Activated B cell treated with CpG ODN at 0.5 μM for 24 hours (primary cell): ENCODE measurements at regions of chr10 and their contacts with region 1.

Region 1: GRCh38 chr10:35642027-35642792 is at the start of gene FZD8:
- DNase-seq: peak; percentile 69
- ATAC-seq: peak; percentile 87
- H3K4me3 Mint-ChIP-seq: peak within 1 kb of the TSS; percentile 88
- H3K27ac Mint-ChIP-seq: no peak within 1 kb of the TSS
- H3K4me1 Mint-ChIP-seq: peaks cover 30% of the 10 kb centered on the region
- H3K27me3 Mint-ChIP-seq: peaks cover 33% of the 10 kb centered on the region
- CTCF ChIP-seq: no peak
- total RNA-seq, gene FZD8: 0.17 and 0.22 TPM in 2 replicates

Region 2: GRCh38 chr10:35090162-35090954 is 551.9 kb before region 1 on chr10 and contains the start of gene CUL2:
- CTCF ChIA-PET with region 1: no interaction called
- POLR2A ChIA-PET with region 1: no interaction called
- intact Hi-C with region 1: loop called (anchors 1 kb)
- DNase-seq: peak; percentile 89
- ATAC-seq: peak; percentile 96
- H3K4me3 Mint-ChIP-seq: peak within 1 kb of the TSS; percentile 98
- H3K27ac Mint-ChIP-seq: peak within 1 kb of the TSS; percentile 98
- H3K4me1 Mint-ChIP-seq: peaks cover 52% of the 10 kb centered on the region
- H3K27me3 Mint-ChIP-seq: peaks cover under 1% of the 10 kb centered on the region
- CTCF ChIP-seq: no peak
- total RNA-seq, gene CUL2: 32.7 and 33.7 TPM in 2 replicates

Region 3: DNA sequence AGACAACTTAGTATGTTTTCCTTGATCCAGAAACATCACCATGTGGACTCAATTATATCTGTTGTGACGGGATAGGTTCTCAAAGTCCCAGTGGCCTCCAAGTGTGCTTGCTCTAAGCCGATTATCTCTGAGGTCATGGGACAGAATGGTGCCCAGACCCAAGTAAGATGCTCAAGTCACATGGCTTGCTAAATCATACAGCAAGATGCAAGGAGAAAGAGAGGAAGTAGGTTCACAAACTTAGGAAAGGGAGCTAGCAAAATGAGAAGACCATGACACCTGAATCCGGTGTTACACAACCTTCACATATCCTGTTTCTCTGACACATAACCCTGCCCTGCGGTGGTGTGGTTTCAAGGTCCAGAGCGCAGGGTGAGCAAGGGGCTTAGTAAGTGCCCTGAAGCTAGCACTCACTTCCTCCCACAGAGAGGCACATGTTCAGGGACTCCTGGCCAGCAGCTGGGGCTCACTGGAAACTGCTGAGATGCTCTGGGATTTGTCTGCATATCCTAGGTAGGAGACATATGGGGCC is 892.3 kb after region 1 on chr10:
- CTCF ChIA-PET with region 1: no interaction called
- POLR2A ChIA-PET with region 1: no interaction called
- intact Hi-C with region 1: loop called (anchors 5 kb)
- DNase-seq: peak; percentile 55
- ATAC-seq: peak; percentile 99
- H3K4me3 Mint-ChIP-seq: peak overlapping the region; percentile 52
- H3K27ac Mint-ChIP-seq: peak overlapping the region; percentile 50
- H3K4me1 Mint-ChIP-seq: peaks cover 37% of the 10 kb centered on the region
- H3K27me3 Mint-ChIP-seq: no peaks in the 10 kb centered on the region
- CTCF ChIP-seq: no peak